A549 (cell line): ENCODE measurements at regions of chr2 and their contacts with region 1.

Region 1: DNA sequence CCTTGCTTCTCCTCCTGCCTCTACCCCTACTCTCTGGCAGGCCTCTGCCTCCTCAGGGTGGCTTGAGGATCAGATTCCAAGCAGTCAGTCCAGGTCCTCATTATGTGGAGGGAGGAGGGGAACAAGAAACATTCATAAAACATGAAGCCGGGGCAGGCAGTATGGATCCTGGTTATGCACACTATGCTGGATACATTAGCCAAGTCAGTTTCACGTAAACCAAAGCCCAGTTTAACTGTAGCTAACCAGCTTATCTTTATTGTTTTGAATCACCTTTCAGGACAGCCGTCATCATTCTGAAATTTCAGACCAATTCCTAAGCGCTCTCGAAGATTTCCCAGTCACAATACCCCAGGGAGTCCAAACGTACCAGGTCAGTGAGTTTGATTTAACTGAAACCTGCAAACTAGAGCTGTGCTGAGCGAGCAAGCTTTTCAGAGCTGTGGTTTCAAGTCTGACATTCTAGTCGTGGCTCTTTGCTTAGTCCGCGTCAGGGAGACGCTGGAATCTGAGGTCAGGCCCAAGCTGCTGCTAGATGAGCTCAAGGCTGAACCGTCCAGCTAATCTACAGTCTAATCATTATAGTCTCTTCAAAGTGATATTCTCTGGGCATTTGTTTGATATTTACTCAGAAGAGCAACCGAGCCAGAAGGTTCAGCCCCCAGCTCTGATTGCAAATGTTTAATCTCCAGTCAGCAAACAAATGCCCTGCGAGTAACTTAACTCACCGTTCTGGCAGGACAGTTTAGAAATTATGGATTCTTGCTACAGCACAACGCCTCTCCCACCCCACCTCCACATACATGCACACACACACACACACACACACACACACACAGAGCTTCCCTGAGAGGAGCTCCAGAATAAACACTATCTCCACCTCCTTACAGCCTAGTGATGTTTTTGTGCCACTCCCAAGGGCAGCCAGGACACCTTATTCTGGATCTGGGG is 63.8 kb upstream of the BZW1 start:
- DNase-seq: peak; percentile 37 to 94
- ATAC-seq: peak; percentile 80 to 93
- H3K4me3 ChIP-seq: no peak overlapping the region
- H3K27ac ChIP-seq: peak overlapping the region; percentile 85 to 88
- H3K4me1 ChIP-seq: peaks cover 40% of the 10 kb centered on the region
- CTCF ChIP-seq: no peak
- EP300 ChIP-seq: peak; percentile 64 to 78; a peak in 2 of 5 replicates
- POLR2A ChIP-seq: no peak
- RAD21 ChIP-seq: peak; percentile 20 to 46; a peak in 4 of 5 replicates

Region 2: GRCh38 chr2:200735061-200735460 is 12.9 kb before region 1 on chr2:
- CTCF ChIA-PET with region 1: interaction called, 53 read pairs
- POLR2A ChIA-PET with region 1: no interaction called
- DNase-seq: no peak
- ATAC-seq: no peak
- H3K4me3 ChIP-seq: no peak overlapping the region
- H3K27ac ChIP-seq: peak overlapping the region in 1 of 2 experiments; percentile 36; a peak in 1 of 6 replicates
- H3K4me1 ChIP-seq: peaks cover 4% of the 10 kb centered on the region; the same call in 1 of the 3 replicates
- CTCF ChIP-seq: no peak
- EP300 ChIP-seq: no peak
- POLR2A ChIP-seq: no peak
- RAD21 ChIP-seq: no peak

Region 3: GRCh38 chr2:200765139-200765951 is 17.4 kb after region 1 on chr2:
- CTCF ChIA-PET with region 1: interaction called, 8 read pairs
- POLR2A ChIA-PET with region 1: interaction called, 28 read pairs
- DNase-seq: peak; percentile 55 to 90
- ATAC-seq: peak; percentile 86 to 89
- H3K4me3 ChIP-seq: no peak overlapping the region
- H3K27ac ChIP-seq: peak overlapping the region; percentile 85 to 88
- H3K4me1 ChIP-seq: peaks cover 60% of the 10 kb centered on the region
- CTCF ChIP-seq: no peak
- EP300 ChIP-seq: peak; percentile 53 to 77; a peak in 3 of 5 replicates
- POLR2A ChIP-seq: no peak
- RAD21 ChIP-seq: peak; percentile 11 to 50; a peak in 3 of 5 replicates

Region 4: GRCh38 chr2:200811336-200812121 is 63.6 kb after region 1 on chr2 and contains the start of gene BZW1:
- CTCF ChIA-PET with region 1: interaction called, 3 read pairs
- POLR2A ChIA-PET with region 1: interaction called, 10 read pairs
- DNase-seq: peak; percentile 85 to 97
- ATAC-seq: peak; percentile 82 to 90
- H3K4me3 ChIP-seq: peak within 1 kb of the TSS; percentile 97
- H3K27ac ChIP-seq: peak within 1 kb of the TSS; percentile 96 to 99
- H3K4me1 ChIP-seq: peaks cover 45% of the 10 kb centered on the region
- CTCF ChIP-seq: no peak
- EP300 ChIP-seq: no peak
- POLR2A ChIP-seq: peak; percentile 46
- RAD21 ChIP-seq: 0 out of 5 replicates have a peak, but pooled peaks of 1 of the 2 experiments have one; percentile 2
- polyA plus RNA-seq, gene BZW1: 439 and 494 TPM in 2 replicates